ENCODE measurements at regions of chr2 and their contacts with region 1.

Region 1: GRCh38 chr2:70919672-70920366 is 15.9 kb upstream of the ATP6V1B1 start:
- DNase-seq: peak; percentile 83
- H3K4me3 ChIP-seq: no peak overlapping the region; a peak in 1 of 4 replicates
- H3K27ac ChIP-seq: no peak overlapping the region
- H3K4me1 ChIP-seq: no peaks in the 10 kb centered on the region
- H3K27me3 ChIP-seq: no peaks in the 10 kb centered on the region
- CTCF ChIP-seq: peak; percentile 93
- EP300 ChIP-seq: no peak
- RAD21 ChIP-seq: peak; percentile 82

Region 2: GRCh38 chr2:70897203-70897976 is 22.4 kb before region 1 on chr2:
- CTCF ChIA-PET with region 1: interaction called, 10 read pairs
- POLR2A ChIA-PET with region 1: interaction called, 4 read pairs
- DNase-seq: no peak
- H3K4me3 ChIP-seq: no peak overlapping the region
- H3K27ac ChIP-seq: no peak overlapping the region
- H3K4me1 ChIP-seq: peaks cover 0 to 13% of the 10 kb centered on the region in 2 experiments; a peak in 2 of 4 replicates
- H3K27me3 ChIP-seq: no peaks in the 10 kb centered on the region
- CTCF ChIP-seq: no peak
- EP300 ChIP-seq: no peak
- RAD21 ChIP-seq: no peak

Region 3: DNA sequence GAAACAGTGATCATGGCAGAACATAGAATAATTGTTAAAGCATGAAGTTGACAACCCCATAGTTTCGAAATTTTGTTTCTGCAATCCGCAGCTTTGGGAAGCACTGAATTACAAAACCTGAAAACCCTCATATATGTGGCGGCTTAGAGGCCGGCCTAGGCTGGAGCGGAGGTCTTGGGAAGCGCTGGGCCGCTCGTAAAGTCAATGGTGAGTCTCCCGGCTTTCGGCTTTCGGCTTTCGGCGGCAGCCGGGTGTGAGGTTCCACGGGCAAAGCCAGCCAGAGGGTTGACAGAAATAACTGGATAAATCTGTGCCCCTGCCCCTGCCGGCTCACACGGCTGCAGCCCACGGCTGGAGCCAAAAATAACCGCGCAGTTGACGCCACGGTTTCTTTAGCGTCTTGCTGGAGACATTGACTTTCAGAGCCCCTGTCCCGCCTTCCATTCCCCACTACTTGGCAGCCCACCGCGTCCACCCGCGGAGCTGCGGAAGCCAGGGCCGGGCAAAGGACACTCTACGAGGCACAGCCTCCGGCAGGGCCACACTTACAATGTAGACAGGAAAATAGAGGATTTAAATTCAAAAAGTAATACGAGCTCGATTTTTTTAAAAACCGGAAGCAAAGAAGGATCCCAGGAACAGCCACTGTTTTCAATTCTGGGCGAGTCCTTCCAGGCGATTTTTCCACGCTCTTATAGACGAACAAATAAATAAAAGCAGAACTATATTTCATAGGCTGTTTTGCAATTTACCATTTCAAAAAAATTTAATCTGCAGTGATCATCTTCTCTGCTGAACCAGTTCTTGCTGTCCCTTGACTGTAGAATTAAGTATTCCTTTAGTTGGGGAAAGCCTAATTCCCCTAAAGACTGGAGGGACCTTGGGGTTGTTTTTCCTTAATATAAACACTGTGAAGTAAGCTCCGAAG is 12.4 kb before region 1 on chr2:
- CTCF ChIA-PET with region 1: interaction called, 26 read pairs
- POLR2A ChIA-PET with region 1: no interaction called
- DNase-seq: no peak
- H3K4me3 ChIP-seq: no peak overlapping the region
- H3K27ac ChIP-seq: no peak overlapping the region
- H3K4me1 ChIP-seq: peaks cover 0 to 4% of the 10 kb centered on the region in 2 experiments; a peak in 2 of 4 replicates
- H3K27me3 ChIP-seq: no peaks in the 10 kb centered on the region
- CTCF ChIP-seq: no peak
- EP300 ChIP-seq: no peak
- RAD21 ChIP-seq: no peak

Region 4: DNA sequence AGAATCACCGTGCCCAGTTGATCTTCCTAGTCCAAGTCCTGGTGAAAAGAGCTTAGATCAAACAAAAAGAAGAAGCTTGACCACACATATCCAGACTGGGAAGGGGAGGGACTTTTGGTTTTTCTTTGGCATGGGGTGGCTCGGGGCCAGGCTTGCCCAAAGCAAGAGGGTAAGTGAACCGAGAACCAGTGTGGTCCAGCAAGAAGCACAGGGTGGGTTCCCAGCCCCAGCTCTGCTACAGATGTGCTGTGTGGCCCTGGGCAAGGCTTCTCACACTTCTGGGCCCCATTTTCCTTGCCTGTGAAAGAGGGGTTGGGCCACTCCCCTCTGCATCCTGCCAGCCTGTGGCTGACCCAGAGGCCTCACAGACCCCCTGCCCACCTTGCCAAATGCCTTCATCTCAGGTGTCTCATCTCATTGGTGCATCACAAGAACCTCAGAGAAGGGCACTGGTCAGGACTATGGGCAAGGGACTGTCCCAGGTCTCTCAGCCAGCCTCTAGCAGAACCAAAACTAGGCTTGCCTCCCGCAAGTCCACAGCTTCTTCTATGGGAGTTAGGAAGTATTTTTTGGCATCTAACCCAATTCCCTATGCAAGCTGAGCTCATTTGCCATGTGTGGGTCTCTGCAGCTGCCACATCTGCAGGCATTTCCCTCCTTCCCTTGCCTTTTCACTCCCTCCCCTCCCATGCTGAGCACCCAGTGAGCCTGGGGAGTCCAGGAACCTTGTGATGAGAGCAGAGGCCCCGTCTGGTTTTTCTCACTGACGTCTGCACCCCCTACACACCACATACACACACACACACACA is 22.8 kb after region 1 on chr2:
- CTCF ChIA-PET with region 1: interaction called, 60 read pairs
- POLR2A ChIA-PET with region 1: no interaction called
- DNase-seq: peak; percentile 73
- H3K4me3 ChIP-seq: no peak overlapping the region
- H3K27ac ChIP-seq: peak overlapping the region in 1 of 2 experiments; percentile 18; a peak in 1 of 4 replicates
- H3K4me1 ChIP-seq: peaks cover 5 to 19% of the 10 kb centered on the region in 2 experiments; a peak in 2 of 4 replicates
- H3K27me3 ChIP-seq: no peaks in the 10 kb centered on the region
- CTCF ChIP-seq: no peak
- EP300 ChIP-seq: peak in 1 of 2 experiments; percentile 32; a peak in 1 of 4 replicates
- RAD21 ChIP-seq: 0 out of 2 replicates have a peak, but pooled peaks have one; percentile 4